ENCODE measurements at regions of chr18 and their contacts with region 1.

Region 1: GRCh38 chr18:11553098-11553940 is 56.1 kb upstream of the SLC35G4 start:
- DNase-seq: peak in 1 of 2 experiments; percentile 30
- H3K4me3 ChIP-seq: no peak overlapping the region
- H3K27ac ChIP-seq: no peak overlapping the region
- H3K4me1 ChIP-seq: no peaks in the 10 kb centered on the region
- H3K27me3 ChIP-seq: peaks cover 37% of the 10 kb centered on the region
- CTCF ChIP-seq: peak; percentile 92

Region 2: DNA sequence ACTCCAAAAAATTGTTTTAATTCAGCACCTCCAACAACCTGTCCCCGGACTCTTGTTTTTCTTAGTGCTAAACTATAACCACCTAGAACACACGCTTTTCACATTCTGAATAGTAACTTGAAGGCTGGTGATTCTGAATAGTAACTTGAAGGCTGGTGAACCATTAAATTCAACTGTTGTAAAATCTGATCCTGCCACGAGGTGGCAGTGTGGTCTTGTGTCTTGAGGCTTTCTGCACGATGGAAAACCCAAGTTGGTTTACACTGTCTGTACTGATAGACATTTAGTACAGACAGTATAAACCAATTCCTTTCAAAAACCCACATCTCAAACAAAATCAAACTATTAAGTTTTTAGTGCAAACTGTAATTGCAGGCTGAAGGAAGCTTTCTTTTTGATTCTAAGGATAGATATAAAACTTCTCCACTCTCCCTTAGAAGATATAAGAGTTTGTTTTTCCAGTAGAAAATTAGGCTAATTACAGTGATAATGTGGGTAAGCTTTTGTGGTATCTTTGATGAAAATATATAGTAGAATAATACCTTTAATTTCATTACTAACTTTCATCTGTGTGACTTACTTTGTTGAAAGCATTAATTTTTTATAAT is 1581.9 kb before region 1 on chr18:
- CTCF ChIA-PET with region 1: no interaction called
- POLR2A ChIA-PET with region 1: no interaction called
- intact Hi-C with region 1: loop called (anchors 10 kb)
- DNase-seq: peak; percentile 65 to 68
- H3K4me3 ChIP-seq: no peak overlapping the region
- H3K27ac ChIP-seq: no peak overlapping the region
- H3K4me1 ChIP-seq: no peaks in the 10 kb centered on the region
- H3K27me3 ChIP-seq: no peaks in the 10 kb centered on the region
- CTCF ChIP-seq: peak; percentile 94

Region 3: GRCh38 chr18:10015941-10016819 is 1537.1 kb before region 1 on chr18:
- CTCF ChIA-PET with region 1: no interaction called
- POLR2A ChIA-PET with region 1: no interaction called
- intact Hi-C with region 1: no loop called
- DNase-seq: peak in 1 of 2 experiments; percentile 81
- H3K4me3 ChIP-seq: no peak overlapping the region
- H3K27ac ChIP-seq: peak overlapping the region; percentile 84
- H3K4me1 ChIP-seq: peaks cover 59% of the 10 kb centered on the region
- H3K27me3 ChIP-seq: no peaks in the 10 kb centered on the region
- CTCF ChIP-seq: no peak

Region 4: GRCh38 chr18:10560450-10561045 is 992.8 kb before region 1 on chr18:
- CTCF ChIA-PET with region 1: interaction called, 3 read pairs
- POLR2A ChIA-PET with region 1: interaction called, 4 read pairs
- intact Hi-C with region 1: loop called (anchors 10 kb)
- DNase-seq: peak in 1 of 2 experiments; percentile 55
- H3K4me3 ChIP-seq: no peak overlapping the region
- H3K27ac ChIP-seq: no peak overlapping the region
- H3K4me1 ChIP-seq: no peaks in the 10 kb centered on the region
- H3K27me3 ChIP-seq: no peaks in the 10 kb centered on the region
- CTCF ChIP-seq: peak; percentile 86

Region 5: GRCh38 chr18:10851824-10852319 is 701.4 kb before region 1 on chr18:
- CTCF ChIA-PET with region 1: no interaction called
- POLR2A ChIA-PET with region 1: no interaction called
- intact Hi-C with region 1: loop called (anchors 1 kb)
- DNase-seq: no peak
- H3K4me3 ChIP-seq: no peak overlapping the region
- H3K27ac ChIP-seq: no peak overlapping the region
- H3K4me1 ChIP-seq: no peaks in the 10 kb centered on the region
- H3K27me3 ChIP-seq: peaks cover 31% of the 10 kb centered on the region
- CTCF ChIP-seq: peak; percentile 84

Region 6: GRCh38 chr18:11310476-11311086 is 242.7 kb before region 1 on chr18:
- CTCF ChIA-PET with region 1: interaction called, 4 read pairs
- POLR2A ChIA-PET with region 1: no interaction called
- intact Hi-C with region 1: loop called (anchors 2 kb)
- DNase-seq: peak in 1 of 2 experiments; percentile 40
- H3K4me3 ChIP-seq: no peak overlapping the region
- H3K27ac ChIP-seq: no peak overlapping the region
- H3K4me1 ChIP-seq: no peaks in the 10 kb centered on the region
- H3K27me3 ChIP-seq: peaks cover 29% of the 10 kb centered on the region
- CTCF ChIP-seq: peak; percentile 69

Region 7: DNA sequence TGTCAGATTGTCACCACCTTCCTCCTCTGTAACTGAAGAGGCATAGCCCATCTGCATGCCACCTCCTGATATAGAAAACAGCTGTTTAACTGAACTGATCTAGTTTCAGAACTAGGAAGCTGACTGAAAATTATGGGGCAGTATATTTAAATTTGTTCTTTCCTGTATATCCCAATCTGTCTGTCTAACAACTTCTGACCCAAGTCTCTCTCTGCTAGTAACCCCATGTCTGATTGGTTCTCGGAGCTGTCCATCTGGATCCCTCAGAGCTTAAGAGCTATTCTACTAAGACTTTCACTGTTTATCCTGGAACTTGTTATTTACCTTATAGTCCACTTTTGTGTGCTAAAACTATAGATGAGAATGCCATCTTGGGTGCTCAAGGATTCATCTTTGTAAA is 12.1 kb before region 1 on chr18:
- CTCF ChIA-PET with region 1: no interaction called
- POLR2A ChIA-PET with region 1: no interaction called
- intact Hi-C with region 1: no loop called
- DNase-seq: no peak
- H3K4me3 ChIP-seq: no peak overlapping the region
- H3K27ac ChIP-seq: no peak overlapping the region
- H3K4me1 ChIP-seq: no peaks in the 10 kb centered on the region
- H3K27me3 ChIP-seq: peaks cover 52% of the 10 kb centered on the region
- CTCF ChIP-seq: no peak

Region 8: DNA sequence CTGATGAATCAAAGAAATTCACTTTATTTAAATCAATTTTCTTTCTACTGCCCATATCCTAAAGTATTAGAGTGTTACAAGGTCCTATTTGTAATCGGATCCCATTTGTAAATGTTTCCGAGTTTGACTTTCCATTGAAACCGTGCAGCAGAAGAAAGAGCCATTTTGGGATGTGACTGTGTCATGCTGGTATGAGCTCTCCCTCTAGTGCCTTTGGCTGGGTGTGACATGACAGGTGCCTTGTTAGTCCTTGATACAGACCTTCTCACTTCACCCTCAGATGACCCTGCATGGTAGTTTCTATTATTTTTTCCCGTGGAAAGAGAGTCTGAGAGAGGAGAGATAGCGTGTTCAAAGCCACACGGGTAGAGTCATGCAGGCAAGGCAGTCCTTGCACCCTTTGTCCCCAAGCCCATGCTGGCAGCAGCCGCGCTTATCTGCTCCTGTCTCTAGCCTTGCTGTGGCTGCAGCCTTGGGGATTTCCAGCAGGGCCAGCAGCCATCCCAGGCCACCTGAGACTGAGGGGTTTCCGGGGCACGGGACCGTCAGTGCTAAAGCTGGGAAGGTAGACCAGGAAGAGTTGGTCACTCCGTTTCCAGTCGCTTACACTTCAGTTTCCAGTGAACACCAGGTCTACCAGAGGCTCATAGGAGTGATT is 319.3 kb after region 1 on chr18:
- CTCF ChIA-PET with region 1: no interaction called
- POLR2A ChIA-PET with region 1: no interaction called
- intact Hi-C with region 1: loop called (anchors 10 kb)
- DNase-seq: peak in 1 of 2 experiments; percentile 41
- H3K4me3 ChIP-seq: no peak overlapping the region
- H3K27ac ChIP-seq: no peak overlapping the region
- H3K4me1 ChIP-seq: no peaks in the 10 kb centered on the region
- H3K27me3 ChIP-seq: no peaks in the 10 kb centered on the region
- CTCF ChIP-seq: peak; percentile 75